GM12878 (cell line): ENCODE measurements at regions of chr15 and their contacts with region 1.

Region 1: GRCh38 chr15:78922527-78923414 is 22.1 kb downstream of the CTSH start:
- DNase-seq: no peak
- ATAC-seq: no peak
- H3K4me3 ChIP-seq: no peak overlapping the region
- H3K27ac ChIP-seq: no peak overlapping the region
- H3K4me1 ChIP-seq: no peaks in the 10 kb centered on the region; the same call in 1 of the 2 replicates
- H3K27me3 ChIP-seq: no peaks in the 10 kb centered on the region
- CTCF ChIP-seq: no peak
- EP300 ChIP-seq: no peak
- POLR2A ChIP-seq: peak; percentile 31; the same call in 1 of the 2 replicates
- RAD21 ChIP-seq: no peak

Region 2: DNA sequence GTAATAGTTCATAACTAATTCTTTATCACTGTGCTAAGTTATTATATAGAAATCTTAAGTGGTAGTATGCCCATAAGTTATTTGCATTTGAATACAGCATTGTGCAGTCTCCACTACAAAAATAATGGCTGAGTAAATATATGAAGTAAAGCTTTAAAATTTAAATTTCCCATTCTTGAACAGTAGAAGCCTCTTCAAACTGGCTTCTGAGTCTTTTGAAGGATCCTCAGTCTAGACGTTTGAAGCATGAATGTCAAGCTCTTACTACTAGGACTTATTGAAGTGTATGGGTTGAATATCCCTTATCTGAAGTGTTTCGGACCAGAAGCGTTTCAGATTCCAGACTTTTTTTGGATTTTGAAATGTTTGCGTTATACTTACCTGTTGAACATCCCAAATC is 33.8 kb before region 1 on chr15:
- CTCF ChIA-PET with region 1: no interaction called
- POLR2A ChIA-PET with region 1: no interaction called
- RAD21 ChIA-PET with region 1: no interaction called
- SMC1A ChIA-PET with region 1: no interaction called
- in situ Hi-C with region 1: no loop called
- intact Hi-C with region 1: no loop called
- DNase-seq: no peak
- ATAC-seq: no peak
- H3K4me3 ChIP-seq: no peak overlapping the region
- H3K27ac ChIP-seq: no peak overlapping the region
- H3K4me1 ChIP-seq: peaks cover 10% of the 10 kb centered on the region
- H3K27me3 ChIP-seq: no peaks in the 10 kb centered on the region
- CTCF ChIP-seq: no peak
- EP300 ChIP-seq: no peak
- POLR2A ChIP-seq: no peak
- RAD21 ChIP-seq: no peak

Region 3: GRCh38 chr15:78938658-78939488 is 16.1 kb after region 1 on chr15:
- CTCF ChIA-PET with region 1: interaction called, 3 read pairs
- POLR2A ChIA-PET with region 1: interaction called, 8 read pairs
- RAD21 ChIA-PET with region 1: no interaction called
- SMC1A ChIA-PET with region 1: interaction called, 10 read pairs
- in situ Hi-C with region 1: no loop called
- intact Hi-C with region 1: no loop called
- DNase-seq: peak; percentile 91
- ATAC-seq: peak; percentile 73
- H3K4me3 ChIP-seq: peak overlapping the region; percentile 60; the same call in 1 of the 2 replicates
- H3K27ac ChIP-seq: peak overlapping the region; percentile 91
- H3K4me1 ChIP-seq: peaks cover 28% of the 10 kb centered on the region
- H3K27me3 ChIP-seq: no peaks in the 10 kb centered on the region
- CTCF ChIP-seq: no peak
- EP300 ChIP-seq: peak; percentile 70 to 73; a peak in 3 of 4 replicates
- POLR2A ChIP-seq: no peak
- RAD21 ChIP-seq: peak; percentile 17; the same call in 1 of the 2 replicates